ENCODE measurements at regions of chr2 and their contacts with region 1.

Region 1: GRCh38 chr2:102240640-102241370 is 54.0 kb downstream of the IL1RL2 start:
- DNase-seq: peak; percentile 91
- ATAC-seq: peak; percentile 99
- H3K4me3 Mint-ChIP-seq: no peak overlapping the region
- H3K27ac Mint-ChIP-seq: peak overlapping the region; percentile 37
- H3K4me1 Mint-ChIP-seq: peaks cover 32% of the 10 kb centered on the region
- H3K27me3 Mint-ChIP-seq: peaks cover 7% of the 10 kb centered on the region

Region 2: GRCh38 chr2:102005989-102006885 is 234.6 kb before region 1 on chr2:
- CTCF ChIA-PET with region 1: interaction called, 46 read pairs
- DNase-seq: peak; percentile 50
- ATAC-seq: peak; percentile 48
- H3K4me3 Mint-ChIP-seq: no peak overlapping the region
- H3K27ac Mint-ChIP-seq: no peak overlapping the region
- H3K4me1 Mint-ChIP-seq: peaks cover 19% of the 10 kb centered on the region
- H3K27me3 Mint-ChIP-seq: peaks cover 9% of the 10 kb centered on the region

Region 3: DNA sequence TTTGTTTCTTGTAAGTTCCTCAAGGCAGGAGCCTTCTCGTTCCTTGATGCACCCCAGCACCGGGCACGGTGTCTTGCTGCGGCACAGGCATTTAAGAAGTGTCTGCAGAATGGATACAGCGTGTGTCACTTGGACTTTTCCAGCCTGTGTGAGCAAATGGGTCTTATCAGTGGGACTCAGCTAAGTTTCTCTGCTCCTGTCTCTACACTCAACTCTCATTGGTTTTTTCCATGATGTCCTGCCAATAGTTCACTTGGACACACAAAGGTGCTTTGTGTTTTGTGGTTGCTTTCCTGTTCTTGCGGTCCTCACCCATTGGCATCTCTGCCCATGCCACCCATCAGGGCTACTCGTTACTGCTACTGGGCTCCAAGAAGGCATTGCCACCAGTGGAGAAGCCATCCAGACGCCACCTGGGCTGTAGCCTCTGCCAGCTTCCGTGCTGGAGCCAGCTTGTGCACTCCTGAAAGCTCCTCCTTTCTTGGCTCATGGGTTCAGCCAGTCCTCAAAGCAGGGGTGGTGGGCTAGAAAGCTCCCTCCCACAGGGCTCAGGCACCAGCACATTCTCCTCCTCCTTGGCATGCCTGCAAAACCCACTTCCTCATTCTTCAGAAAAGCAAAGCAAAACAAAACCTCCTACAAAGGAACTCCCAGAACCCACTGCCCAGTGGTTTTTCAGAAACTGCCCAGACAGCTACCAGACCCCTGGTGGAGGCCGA is 207.6 kb before region 1 on chr2:
- CTCF ChIA-PET with region 1: interaction called, 13 read pairs
- DNase-seq: no peak
- ATAC-seq: peak; percentile 42
- H3K4me3 Mint-ChIP-seq: no peak overlapping the region
- H3K27ac Mint-ChIP-seq: peak overlapping the region; percentile 62
- H3K4me1 Mint-ChIP-seq: peaks cover 38% of the 10 kb centered on the region
- H3K27me3 Mint-ChIP-seq: no peaks in the 10 kb centered on the region

Region 4: DNA sequence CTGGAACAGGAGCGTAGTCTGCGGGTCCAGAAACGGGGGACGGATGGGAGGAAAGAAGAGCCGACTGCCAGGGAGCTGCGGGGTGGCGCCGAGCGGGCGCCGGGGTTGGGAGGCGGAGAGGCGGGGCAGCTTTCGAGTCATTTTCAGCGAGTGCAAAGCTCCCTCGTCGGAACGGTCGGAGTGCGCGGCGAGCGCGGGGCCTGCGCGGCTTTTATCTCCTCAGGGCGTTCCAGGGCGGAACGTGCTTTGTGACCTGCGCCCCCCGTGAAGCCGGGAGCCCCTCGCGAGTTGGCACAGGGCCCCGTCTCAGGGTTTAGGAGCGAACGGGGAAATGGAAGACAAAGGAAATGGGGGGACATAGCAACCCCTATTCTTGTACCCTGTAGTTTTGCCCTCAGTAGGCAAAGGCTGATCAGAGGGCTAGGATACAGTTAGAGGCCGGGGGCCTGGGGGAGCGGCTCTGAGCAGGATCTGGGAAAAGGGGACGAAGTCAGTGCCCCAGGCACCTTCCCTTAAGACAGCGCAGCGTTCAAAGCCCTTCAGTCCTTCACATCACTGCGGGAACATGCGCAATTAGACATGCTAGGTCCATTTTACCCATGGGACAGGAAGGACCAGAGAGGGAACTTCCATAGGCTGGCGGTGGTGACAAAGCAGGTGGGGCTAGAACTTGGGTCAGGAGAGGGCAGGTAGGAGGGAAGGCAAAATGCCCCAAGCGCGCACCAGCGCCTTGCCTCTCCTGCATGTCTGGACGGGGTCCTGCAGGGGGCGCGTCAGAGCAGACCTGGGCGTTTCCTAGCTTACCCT is 10.4 kb after region 1 on chr2:
- CTCF ChIA-PET with region 1: interaction called, 86 read pairs
- DNase-seq: peak; percentile 67
- ATAC-seq: peak; percentile 75
- H3K4me3 Mint-ChIP-seq: peak overlapping the region; percentile 75
- H3K27ac Mint-ChIP-seq: peak overlapping the region; percentile 32
- H3K4me1 Mint-ChIP-seq: peaks cover 40% of the 10 kb centered on the region
- H3K27me3 Mint-ChIP-seq: peaks cover 21% of the 10 kb centered on the region

Region 5: GRCh38 chr2:102350137-102350793 is 109.5 kb after region 1 on chr2:
- CTCF ChIA-PET with region 1: interaction called, 30 read pairs
- DNase-seq: no peak
- ATAC-seq: peak; percentile 57
- H3K4me3 Mint-ChIP-seq: no peak overlapping the region
- H3K27ac Mint-ChIP-seq: no peak overlapping the region
- H3K4me1 Mint-ChIP-seq: peaks cover under 1% of the 10 kb centered on the region
- H3K27me3 Mint-ChIP-seq: peaks cover 15% of the 10 kb centered on the region

Region 6: GRCh38 chr2:102449370-102449974 is 208.7 kb after region 1 on chr2:
- CTCF ChIA-PET with region 1: interaction called, 39 read pairs
- DNase-seq: peak; percentile 74
- ATAC-seq: peak; percentile 45
- H3K4me3 Mint-ChIP-seq: no peak overlapping the region
- H3K27ac Mint-ChIP-seq: no peak overlapping the region
- H3K4me1 Mint-ChIP-seq: peaks cover 2% of the 10 kb centered on the region
- H3K27me3 Mint-ChIP-seq: peaks cover 3% of the 10 kb centered on the region